PC-9 (cell line): ENCODE measurements at regions of chr15 and their contacts with region 1.

Region 1: DNA sequence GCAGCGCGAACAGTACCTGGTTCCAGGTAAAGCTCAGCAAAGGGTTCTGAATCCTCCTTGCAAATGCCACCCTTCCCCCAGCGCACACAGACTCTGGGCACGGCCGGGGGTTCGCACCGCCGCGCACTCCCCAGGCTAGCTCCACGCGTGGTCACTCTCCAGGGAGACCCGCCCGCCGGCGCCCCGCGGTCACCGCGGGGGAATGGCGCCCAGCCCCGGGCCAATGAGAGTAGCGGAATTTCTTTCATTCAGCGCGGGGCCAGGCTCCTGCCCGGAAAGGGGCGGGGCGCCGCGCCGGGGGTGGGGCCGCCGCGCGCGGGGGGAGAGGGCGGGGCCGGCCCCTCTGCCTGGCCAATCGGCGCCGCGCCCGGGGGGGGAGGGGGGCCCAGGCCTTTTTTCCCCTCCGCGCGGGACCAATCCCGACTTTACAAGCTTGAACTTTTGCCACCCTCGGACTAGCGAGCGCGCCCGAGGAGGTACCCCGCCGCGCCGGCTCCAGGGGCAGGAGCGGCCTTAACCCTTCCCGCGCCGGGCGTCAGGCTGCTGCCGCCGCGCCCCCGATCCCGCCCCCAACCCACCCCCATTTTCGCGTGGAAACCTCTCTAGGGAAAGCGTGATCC is 1.1 kb upstream of the SMAD6 start:
- DNase-seq: peak; percentile 78 to 97
- H3K4me3 ChIP-seq: peak overlapping the region; percentile 81
- H3K27ac ChIP-seq: no peak overlapping the region
- H3K4me1 ChIP-seq: peaks cover 20% of the 10 kb centered on the region
- H3K27me3 ChIP-seq: no peaks in the 10 kb centered on the region
- CTCF ChIP-seq: no peak

Region 2: DNA sequence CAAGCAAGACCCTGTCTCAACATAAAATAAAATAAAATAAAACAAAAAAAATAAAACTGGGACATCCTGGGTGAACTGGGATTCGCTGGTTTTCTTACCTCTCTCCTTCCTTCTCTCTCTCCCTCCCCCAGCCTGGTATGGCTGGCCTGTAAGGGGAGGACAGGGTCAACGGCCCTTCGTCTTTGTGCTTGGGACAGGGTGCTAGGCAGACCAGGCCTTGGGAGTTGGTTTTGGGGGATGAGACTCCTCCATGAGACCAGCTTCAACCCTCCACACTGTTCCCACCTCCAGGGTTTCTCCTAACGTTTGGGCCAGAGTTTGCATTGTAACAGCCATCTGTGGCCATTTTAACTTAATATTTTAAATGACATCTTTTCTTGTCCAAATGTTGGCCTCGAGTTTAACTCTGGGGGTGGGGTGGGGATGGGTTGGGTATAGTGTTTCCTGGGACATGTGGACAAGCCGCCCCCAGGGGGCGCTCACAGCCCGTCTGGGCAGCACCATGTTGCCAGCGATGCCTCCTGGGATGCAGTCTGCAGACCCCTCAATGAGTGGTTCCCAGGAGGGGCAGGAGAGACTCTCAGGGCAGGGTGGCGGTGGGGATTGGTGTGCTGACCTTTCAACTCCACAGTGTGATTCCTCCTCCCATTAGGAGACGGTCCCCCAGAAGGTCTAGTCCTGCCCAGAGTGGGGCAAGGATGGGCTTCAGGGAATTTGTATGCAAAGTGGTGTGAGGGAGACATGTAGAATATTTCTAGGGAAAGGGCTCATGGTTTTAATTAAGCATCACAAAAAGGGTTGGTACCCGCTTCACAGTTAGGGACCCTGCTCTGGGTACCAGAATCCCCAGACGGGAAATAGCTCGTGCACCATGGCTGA is 97.4 kb before region 1 on chr15:
- CTCF ChIA-PET with region 1: no interaction called
- POLR2A ChIA-PET with region 1: no interaction called
- intact Hi-C with region 1: loop called (anchors 1 kb)
- DNase-seq: peak in 1 of 2 experiments; percentile 59
- H3K4me3 ChIP-seq: no peak overlapping the region
- H3K27ac ChIP-seq: no peak overlapping the region
- H3K4me1 ChIP-seq: no peaks in the 10 kb centered on the region
- H3K27me3 ChIP-seq: no peaks in the 10 kb centered on the region
- CTCF ChIP-seq: peak; percentile 81

Region 3: GRCh38 chr15:66633041-66633937 is 67.6 kb before region 1 on chr15:
- CTCF ChIA-PET with region 1: interaction called, 12 read pairs
- POLR2A ChIA-PET with region 1: no interaction called
- intact Hi-C with region 1: no loop called
- DNase-seq: no peak
- H3K4me3 ChIP-seq: no peak overlapping the region
- H3K27ac ChIP-seq: no peak overlapping the region
- H3K4me1 ChIP-seq: no peaks in the 10 kb centered on the region
- H3K27me3 ChIP-seq: no peaks in the 10 kb centered on the region
- CTCF ChIP-seq: no peak

Region 4: DNA sequence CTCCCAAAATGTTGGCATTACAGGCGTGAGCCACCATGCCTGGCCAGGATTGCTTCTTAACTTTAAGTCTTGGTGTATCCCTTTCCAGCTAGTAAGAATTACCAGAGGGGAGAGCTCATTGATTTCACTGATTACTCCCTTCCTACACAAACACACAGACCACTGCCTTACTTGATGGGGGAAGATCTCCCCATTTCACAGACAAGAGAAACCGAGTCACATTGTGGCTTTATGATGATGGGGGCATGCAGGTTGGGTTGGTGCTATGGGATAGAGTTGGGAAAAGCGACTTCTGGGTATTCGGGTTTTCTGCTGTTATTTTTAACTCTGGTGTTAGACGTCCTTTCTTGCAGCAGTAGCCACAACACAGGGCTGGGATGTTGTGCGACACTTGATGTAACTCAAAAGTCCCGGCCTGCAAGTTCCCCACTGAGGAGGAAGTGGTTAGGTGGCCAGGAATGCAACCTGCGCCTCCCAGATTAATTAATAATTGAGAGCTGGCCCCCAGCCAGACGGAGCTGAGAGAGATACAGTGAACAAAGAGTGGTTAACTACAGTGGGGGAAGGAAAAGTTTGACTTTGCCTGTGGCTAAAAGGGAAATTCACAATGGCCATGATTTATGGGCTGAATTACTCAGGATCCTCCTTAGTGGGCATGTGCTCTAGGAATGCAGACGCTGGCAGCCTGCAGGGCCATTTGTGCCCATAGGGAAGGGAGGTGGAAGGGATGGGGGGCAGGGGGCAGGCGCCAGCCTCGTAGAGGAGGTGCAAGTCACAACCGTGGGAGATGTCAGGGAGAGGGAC is 64.8 kb after region 1 on chr15:
- CTCF ChIA-PET with region 1: no interaction called
- POLR2A ChIA-PET with region 1: interaction called, 4 read pairs
- intact Hi-C with region 1: loop called (anchors 1 kb)
- DNase-seq: peak; percentile 95 to 97
- H3K4me3 ChIP-seq: 0 out of 2 replicates have a peak overlapping the region, but pooled peaks have one; percentile 8
- H3K27ac ChIP-seq: peak overlapping the region; percentile 71
- H3K4me1 ChIP-seq: peaks cover 83% of the 10 kb centered on the region
- H3K27me3 ChIP-seq: no peaks in the 10 kb centered on the region
- CTCF ChIP-seq: no peak

Region 5: DNA sequence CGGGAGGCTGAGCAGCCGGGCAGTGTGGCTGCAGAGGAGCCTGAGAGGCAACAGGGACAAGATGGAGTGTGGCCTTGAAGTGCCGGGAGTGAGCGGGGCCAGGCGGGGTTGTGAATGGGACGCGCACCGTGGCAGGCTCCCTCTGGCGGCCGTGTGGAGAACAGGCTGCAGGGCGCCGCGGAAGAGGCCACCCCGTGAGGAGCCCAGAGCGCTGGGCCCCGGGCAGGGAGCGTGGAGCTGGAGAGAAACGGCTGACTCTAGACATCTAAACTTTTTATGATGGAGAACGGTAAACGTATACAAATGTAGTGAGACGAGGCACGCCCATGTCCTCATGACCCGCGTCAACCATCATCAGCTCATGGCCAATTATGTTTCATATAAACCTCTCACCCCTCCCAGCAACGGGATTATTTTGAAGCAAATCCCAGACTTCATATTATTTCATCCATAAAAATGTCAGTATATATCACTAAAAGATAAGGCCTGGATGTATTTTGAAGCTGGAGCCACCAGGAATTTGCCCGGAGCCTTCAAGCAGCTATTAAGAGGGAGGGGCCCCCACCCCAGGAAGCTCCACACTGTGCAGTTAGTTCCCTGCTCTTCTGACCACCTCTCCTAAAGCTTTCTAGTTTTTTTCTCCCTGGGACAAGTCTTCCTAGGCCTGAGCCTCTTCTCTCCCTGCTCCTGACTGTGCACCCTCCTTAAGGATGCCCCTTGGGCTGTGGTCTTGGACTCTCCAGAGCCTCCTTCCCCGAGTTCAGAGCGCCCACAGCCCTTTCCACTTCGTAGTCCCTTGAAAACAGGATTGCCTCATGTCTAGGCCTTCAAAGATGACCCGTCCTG is 150.5 kb after region 1 on chr15:
- CTCF ChIA-PET with region 1: interaction called, 11 read pairs
- POLR2A ChIA-PET with region 1: no interaction called
- intact Hi-C with region 1: loop called (anchors 1 kb)
- DNase-seq: peak in 1 of 2 experiments; percentile 71
- H3K4me3 ChIP-seq: no peak overlapping the region
- H3K27ac ChIP-seq: no peak overlapping the region
- H3K4me1 ChIP-seq: peaks cover 13% of the 10 kb centered on the region; the same call in 1 of the 2 replicates
- H3K27me3 ChIP-seq: no peaks in the 10 kb centered on the region
- CTCF ChIP-seq: peak; percentile 86

Region 6: DNA sequence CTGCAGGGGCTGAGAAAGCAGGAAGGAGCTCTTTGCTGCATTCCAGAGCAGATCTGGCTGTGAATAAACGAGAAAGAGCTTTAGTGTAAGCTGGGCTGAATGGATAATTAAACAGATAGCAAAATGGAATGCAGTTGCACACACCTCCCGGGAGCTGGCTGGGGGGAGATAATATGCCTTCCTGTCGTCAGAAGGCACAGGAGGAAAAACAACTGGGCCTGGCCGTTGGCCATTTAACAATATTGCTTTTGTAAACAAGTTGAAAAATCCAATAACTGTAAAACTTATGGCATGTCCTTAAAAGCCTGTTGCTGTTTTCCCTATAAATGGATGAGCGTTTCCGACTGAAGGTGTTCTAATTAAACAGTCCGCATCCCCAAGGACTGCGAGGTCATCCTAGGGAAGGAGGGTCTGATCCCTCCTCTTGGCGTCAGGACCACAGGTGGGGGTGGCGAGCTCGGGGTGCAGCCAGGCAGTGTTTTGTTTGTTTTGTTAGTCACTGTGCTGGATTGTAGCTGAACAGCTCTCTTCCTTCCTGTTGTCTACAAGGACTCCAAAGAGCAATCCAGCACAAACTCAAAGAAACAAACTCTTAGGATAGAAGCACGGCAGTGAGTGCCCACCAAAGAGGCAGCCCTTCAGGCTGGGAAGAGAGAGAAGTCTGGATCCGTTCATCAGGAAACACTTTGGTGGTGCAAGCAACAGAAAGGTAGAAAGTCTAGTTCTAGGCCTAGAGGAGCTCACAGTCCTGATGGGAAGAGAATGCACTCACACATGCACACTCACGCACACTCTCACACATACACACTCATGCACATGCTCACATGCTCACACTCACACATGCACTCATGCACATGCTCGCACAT is 231.1 kb after region 1 on chr15:
- CTCF ChIA-PET with region 1: no interaction called
- POLR2A ChIA-PET with region 1: no interaction called
- intact Hi-C with region 1: loop called (anchors 2 kb)
- DNase-seq: peak; percentile 83 to 91
- H3K4me3 ChIP-seq: peak overlapping the region; percentile 45
- H3K27ac ChIP-seq: peak overlapping the region; percentile 93
- H3K4me1 ChIP-seq: peaks cover 52% of the 10 kb centered on the region
- H3K27me3 ChIP-seq: no peaks in the 10 kb centered on the region
- CTCF ChIP-seq: no peak